ENCODE measurements at regions of chr11 and their contacts with region 1.

Region 1: DNA sequence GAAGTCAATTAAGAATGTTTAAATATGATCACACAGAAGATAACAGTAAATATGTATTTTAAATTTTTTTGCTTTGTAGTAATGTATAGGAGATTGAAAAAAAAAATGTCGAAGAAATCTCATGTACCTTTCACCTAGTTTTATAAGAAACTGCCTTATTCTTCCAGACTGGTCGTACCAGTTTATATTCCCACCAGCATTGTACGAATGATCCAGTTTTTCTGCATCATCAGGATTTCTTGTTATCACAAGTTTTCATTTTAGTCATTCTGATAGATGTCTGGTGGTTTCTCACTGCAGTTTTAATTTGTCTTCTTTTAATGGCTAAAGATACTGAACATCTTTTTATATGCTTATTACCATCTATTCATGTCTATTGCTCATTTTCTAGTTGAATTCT is 101.8 kb upstream of the CTSC start:
- DNase-seq: no peak
- ATAC-seq: no peak
- H3K4me3 ChIP-seq: no peak overlapping the region
- H3K27ac ChIP-seq: no peak overlapping the region
- H3K4me1 ChIP-seq: no peaks in the 10 kb centered on the region
- H3K27me3 ChIP-seq: no peaks in the 10 kb centered on the region
- CTCF ChIP-seq: no peak

Region 2: GRCh38 chr11:88363566-88364169 is 75.7 kb before region 1 on chr11:
- CTCF ChIA-PET with region 1: no interaction called
- POLR2A ChIA-PET with region 1: interaction called, 11 read pairs
- in situ Hi-C with region 1: no loop called
- intact Hi-C with region 1: no loop called
- DNase-seq: no peak
- ATAC-seq: no peak
- H3K4me3 ChIP-seq: no peak overlapping the region
- H3K27ac ChIP-seq: no peak overlapping the region
- H3K4me1 ChIP-seq: no peaks in the 10 kb centered on the region
- H3K27me3 ChIP-seq: no peaks in the 10 kb centered on the region
- CTCF ChIP-seq: no peak

Region 3: GRCh38 chr11:88494848-88495247 is 55.5 kb after region 1 on chr11:
- CTCF ChIA-PET with region 1: no interaction called
- POLR2A ChIA-PET with region 1: no interaction called
- in situ Hi-C with region 1: no loop called
- intact Hi-C with region 1: no loop called
- DNase-seq: no peak
- ATAC-seq: no peak
- H3K4me3 ChIP-seq: no peak overlapping the region
- H3K27ac ChIP-seq: no peak overlapping the region
- H3K4me1 ChIP-seq: no peaks in the 10 kb centered on the region
- H3K27me3 ChIP-seq: no peaks in the 10 kb centered on the region
- CTCF ChIP-seq: peak; percentile 13; the same call in 1 of the 2 replicates